Endothelial cell of umbilical vein (primary cell): ENCODE measurements at regions of chr15 and their contacts with region 1.

Region 1: GRCh38 chr15:98518823-98519561 is 129.3 kb upstream of the IGF1R start:
- DNase-seq: peak; percentile 64
- H3K4me3 ChIP-seq: no peak overlapping the region
- H3K27ac ChIP-seq: no peak overlapping the region
- H3K4me1 ChIP-seq: no peaks in the 10 kb centered on the region
- H3K27me3 ChIP-seq: no peaks in the 10 kb centered on the region
- CTCF ChIP-seq: peak; percentile 71 to 73
- POLR2A ChIP-seq: no peak

Region 2: DNA sequence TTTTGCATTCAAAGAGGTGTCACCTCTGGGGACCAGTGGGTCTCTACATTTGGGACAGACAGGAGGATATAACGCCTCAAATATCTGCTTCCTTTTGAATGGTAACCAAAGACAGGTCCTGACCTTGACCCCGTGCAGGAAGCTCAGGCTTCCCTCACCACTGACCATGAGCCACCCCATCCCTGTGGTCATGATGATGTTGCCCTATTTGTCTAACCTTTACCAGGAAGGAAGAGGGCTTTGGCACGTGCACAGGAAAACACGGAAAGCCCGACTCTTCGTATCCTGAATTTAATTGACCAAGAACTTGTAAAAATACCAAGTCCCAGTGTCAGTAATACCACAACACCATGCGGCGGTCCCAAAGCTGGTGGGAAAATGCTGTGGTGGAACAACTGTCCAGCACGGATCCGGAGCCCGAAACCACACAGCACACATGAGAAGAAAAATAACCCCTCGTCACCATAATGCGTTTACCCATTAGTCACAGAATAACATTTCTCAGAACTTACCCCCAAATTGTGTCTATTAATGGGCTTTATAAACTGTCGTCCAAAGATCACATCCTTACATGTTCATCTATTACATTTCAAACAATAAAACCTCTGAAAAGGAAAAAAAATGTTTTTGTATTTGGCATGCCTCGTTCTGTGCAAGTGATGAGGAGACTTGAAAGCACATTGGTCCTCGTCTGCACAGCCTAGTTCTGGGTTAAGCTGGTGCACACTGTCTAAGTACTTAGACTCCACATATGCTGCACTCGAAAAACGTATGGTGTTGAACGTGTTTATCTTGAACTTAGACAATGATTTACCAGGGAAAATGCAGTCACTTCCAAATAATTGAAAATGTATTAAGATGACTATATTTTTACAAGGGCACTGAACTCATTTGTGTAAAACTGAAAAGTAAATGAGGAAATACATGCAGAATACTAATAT is 10.5 kb after region 1 on chr15:
- CTCF ChIA-PET with region 1: interaction called, 13 read pairs
- POLR2A ChIA-PET with region 1: no interaction called
- dilution Hi-C with region 1: no loop called
- intact Hi-C with region 1: no loop called
- DNase-seq: no peak
- H3K4me3 ChIP-seq: no peak overlapping the region
- H3K27ac ChIP-seq: no peak overlapping the region
- H3K4me1 ChIP-seq: no peaks in the 10 kb centered on the region
- H3K27me3 ChIP-seq: peaks cover 11 to 20% of the 10 kb centered on the region in 2 experiments
- CTCF ChIP-seq: no peak
- POLR2A ChIP-seq: no peak

Region 3: DNA sequence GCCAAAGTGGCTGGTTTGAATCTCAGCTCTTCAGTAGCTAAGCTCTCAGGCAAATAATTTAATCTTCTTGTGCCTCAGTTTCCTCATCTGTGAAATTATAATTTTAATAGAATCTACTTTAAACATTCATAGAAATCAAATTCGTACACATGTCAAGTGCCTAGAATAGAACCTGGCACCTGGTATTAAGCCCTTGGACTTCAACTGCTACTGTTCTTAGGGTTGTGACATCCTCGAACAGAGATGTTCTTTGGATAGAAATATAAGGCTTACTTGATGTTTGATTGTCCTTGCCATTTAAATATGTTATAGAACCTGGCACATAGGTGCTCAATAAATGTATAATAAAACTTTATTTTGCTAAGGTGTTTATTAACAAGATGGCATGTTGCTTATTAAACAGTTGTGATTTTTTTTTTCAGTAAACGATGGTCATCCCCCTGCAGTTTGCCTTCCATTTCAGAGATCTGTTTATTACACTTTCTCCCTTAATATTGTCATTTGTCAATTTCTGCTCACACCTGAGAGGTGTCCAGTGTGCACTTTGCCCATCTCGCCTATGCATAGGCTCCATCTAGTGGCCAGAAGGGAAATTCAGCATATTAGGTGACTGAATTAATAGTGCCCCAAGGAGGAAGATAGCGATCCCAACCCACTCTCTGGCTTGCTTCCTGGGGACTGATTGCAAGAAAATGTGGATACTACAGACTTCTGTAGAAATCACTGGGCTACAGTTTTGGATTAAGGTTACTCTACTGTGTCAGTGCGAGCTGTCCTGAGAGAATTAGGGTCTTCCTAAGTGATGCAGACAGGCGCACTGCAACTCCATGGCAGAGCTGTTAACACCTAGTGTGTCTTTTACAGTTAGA is 140.1 kb after region 1 on chr15:
- CTCF ChIA-PET with region 1: interaction called, 78 read pairs
- POLR2A ChIA-PET with region 1: no interaction called
- dilution Hi-C with region 1: no loop called
- intact Hi-C with region 1: loop called (anchors 1 kb)
- DNase-seq: peak; percentile 51
- H3K4me3 ChIP-seq: no peak overlapping the region
- H3K27ac ChIP-seq: no peak overlapping the region
- H3K4me1 ChIP-seq: peaks cover 23% of the 10 kb centered on the region
- H3K27me3 ChIP-seq: no peaks in the 10 kb centered on the region
- CTCF ChIP-seq: peak; percentile 75 to 81
- POLR2A ChIP-seq: no peak

Region 4: DNA sequence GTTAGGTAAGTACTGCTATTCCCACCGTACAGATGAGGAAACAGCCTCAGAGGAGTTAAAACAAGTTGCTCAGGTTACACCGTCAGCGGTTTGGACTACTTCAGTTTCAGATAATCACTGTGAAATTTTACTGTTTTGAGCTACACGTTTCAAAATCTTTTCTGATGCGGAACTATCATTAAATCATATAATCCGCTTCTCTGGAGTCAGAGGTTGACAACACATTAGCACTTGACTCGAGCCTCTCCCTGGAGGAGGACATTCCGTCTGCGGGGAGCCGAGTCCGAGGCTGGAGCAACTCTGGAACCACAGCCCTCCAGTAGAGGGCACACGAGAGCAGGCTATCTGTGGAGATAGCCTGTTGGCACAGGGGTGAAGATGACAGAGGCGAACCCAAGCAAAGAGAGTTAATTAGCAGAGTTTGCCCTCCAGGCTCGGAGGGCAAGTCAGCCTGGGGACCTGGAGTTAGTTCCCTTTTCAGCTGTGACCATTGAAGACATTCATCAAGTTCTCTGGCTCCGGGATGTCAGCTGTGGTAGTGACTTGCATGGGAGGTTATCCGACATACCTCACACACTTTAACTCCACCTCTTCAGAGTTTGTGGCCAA is 260.6 kb after region 1 on chr15:
- CTCF ChIA-PET with region 1: interaction called, 7 read pairs
- POLR2A ChIA-PET with region 1: no interaction called
- dilution Hi-C with region 1: no loop called
- intact Hi-C with region 1: loop called (anchors 1 kb)
- DNase-seq: peak; percentile 77
- H3K4me3 ChIP-seq: no peak overlapping the region
- H3K27ac ChIP-seq: no peak overlapping the region
- H3K4me1 ChIP-seq: peaks cover 5% of the 10 kb centered on the region
- H3K27me3 ChIP-seq: no peaks in the 10 kb centered on the region
- CTCF ChIP-seq: peak; percentile 93 to 95
- POLR2A ChIP-seq: no peak

Region 5: GRCh38 chr15:98904544-98904943 is 385.6 kb after region 1 on chr15:
- CTCF ChIA-PET with region 1: interaction called, 16 read pairs
- POLR2A ChIA-PET with region 1: no interaction called
- dilution Hi-C with region 1: no loop called
- intact Hi-C with region 1: loop called (anchors 2 kb)
- DNase-seq: peak; percentile 53
- H3K4me3 ChIP-seq: no peak overlapping the region
- H3K27ac ChIP-seq: peak overlapping the region; percentile 15
- H3K4me1 ChIP-seq: peaks cover 42% of the 10 kb centered on the region
- H3K27me3 ChIP-seq: no peaks in the 10 kb centered on the region
- CTCF ChIP-seq: peak; percentile 52 to 58
- POLR2A ChIP-seq: no peak

Region 6: GRCh38 chr15:99070208-99070607 is 551.2 kb after region 1 on chr15:
- CTCF ChIA-PET with region 1: interaction called, 170 read pairs
- POLR2A ChIA-PET with region 1: no interaction called
- dilution Hi-C with region 1: no loop called
- intact Hi-C with region 1: no loop called
- DNase-seq: no peak
- H3K4me3 ChIP-seq: no peak overlapping the region
- H3K27ac ChIP-seq: no peak overlapping the region
- H3K4me1 ChIP-seq: no peaks in the 10 kb centered on the region
- H3K27me3 ChIP-seq: peaks cover 0 to 1% of the 10 kb centered on the region in 2 experiments
- CTCF ChIP-seq: no peak
- POLR2A ChIP-seq: no peak